ENCODE measurements at regions of chr12 and their contacts with region 1.

Region 1: DNA sequence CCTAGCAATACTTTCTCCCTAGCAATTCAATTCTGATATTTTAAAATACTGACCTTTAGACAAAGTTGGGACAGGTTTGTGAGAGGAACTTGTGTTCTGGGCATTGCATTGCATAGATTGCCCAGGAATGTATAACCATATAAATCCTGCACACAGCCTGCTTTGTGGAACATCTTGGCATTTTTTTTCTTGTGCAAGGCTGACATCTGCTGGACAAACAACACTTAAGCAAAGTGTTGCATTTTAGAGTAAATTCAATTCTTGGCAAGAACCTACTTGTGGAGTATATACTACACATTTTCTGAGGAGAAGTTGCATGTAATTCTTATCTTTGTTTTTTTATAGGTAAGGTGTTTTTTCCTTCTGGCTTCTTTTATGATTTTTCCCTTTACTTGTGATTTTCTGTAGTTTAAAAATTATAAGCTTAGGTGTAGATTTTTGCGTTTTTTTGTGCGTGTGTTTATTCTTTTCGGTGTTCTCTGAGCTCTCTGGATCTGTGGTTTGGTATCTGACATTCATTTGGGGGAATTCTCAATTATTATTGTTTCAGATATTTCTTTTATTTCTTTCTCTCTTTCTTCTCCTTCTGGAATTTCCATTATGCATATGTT is 26.4 kb downstream of the TESPA1 start:
- DNase-seq: peak; percentile 65
- ATAC-seq: peak; percentile 43
- H3K4me3 Mint-ChIP-seq: no peak overlapping the region
- H3K27ac Mint-ChIP-seq: no peak overlapping the region
- H3K4me1 Mint-ChIP-seq: peaks cover 67% of the 10 kb centered on the region
- H3K27me3 Mint-ChIP-seq: no peaks in the 10 kb centered on the region

Region 2: GRCh38 chr12:54541751-54542290 is 416.3 kb before region 1 on chr12:
- CTCF ChIA-PET with region 1: no interaction called
- POLR2A ChIA-PET with region 1: no interaction called
- DNase-seq: no peak
- ATAC-seq: no peak
- H3K4me3 Mint-ChIP-seq: no peak overlapping the region
- H3K27ac Mint-ChIP-seq: no peak overlapping the region
- H3K4me1 Mint-ChIP-seq: no peaks in the 10 kb centered on the region
- H3K27me3 Mint-ChIP-seq: no peaks in the 10 kb centered on the region

Region 3: DNA sequence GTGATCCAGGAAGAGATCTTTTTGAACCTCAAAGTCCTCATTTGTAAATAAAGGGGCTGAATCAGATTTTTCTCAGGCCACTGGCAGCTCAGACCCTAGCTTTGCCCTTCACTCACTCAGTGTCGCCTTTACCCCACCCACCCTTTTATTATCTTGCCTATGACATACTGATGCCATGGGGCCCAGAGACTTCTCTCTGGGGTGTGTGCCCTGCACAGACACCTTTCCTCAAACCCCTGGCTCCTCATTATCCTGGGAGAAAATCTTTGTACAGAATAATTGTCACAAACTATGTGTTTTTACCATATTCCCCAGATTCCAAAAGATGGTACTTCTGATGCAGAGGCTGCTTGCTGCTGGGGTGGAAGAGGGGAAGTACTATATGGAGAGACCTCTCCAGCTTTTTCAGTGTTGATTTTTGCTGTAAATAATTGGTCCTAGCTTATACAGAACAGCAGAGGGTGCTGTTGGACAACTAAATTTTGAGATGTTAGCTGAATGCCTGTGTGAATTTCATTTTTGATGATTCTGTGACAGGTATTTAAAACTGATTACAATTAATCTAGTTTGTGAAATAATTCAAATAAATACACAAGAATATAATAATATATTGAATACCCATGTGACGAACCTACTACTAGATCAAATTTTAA is 256.1 kb before region 1 on chr12:
- CTCF ChIA-PET with region 1: interaction called, 15 read pairs
- POLR2A ChIA-PET with region 1: no interaction called
- DNase-seq: peak; percentile 46
- ATAC-seq: peak; percentile 64
- H3K4me3 Mint-ChIP-seq: no peak overlapping the region
- H3K27ac Mint-ChIP-seq: no peak overlapping the region
- H3K4me1 Mint-ChIP-seq: no peaks in the 10 kb centered on the region
- H3K27me3 Mint-ChIP-seq: peaks cover 16% of the 10 kb centered on the region

Region 4: GRCh38 chr12:54740882-54741281 is 217.3 kb before region 1 on chr12:
- CTCF ChIA-PET with region 1: interaction called, 13 read pairs
- POLR2A ChIA-PET with region 1: no interaction called
- DNase-seq: no peak
- ATAC-seq: peak; percentile 80
- H3K4me3 Mint-ChIP-seq: peak overlapping the region; percentile 32
- H3K27ac Mint-ChIP-seq: peak overlapping the region; percentile 80
- H3K4me1 Mint-ChIP-seq: peaks cover 74% of the 10 kb centered on the region
- H3K27me3 Mint-ChIP-seq: peaks cover 3% of the 10 kb centered on the region

Region 5: GRCh38 chr12:54759751-54760150 is 198.4 kb before region 1 on chr12:
- CTCF ChIA-PET with region 1: interaction called, 23 read pairs
- POLR2A ChIA-PET with region 1: no interaction called
- DNase-seq: peak; percentile 33
- ATAC-seq: no peak
- H3K4me3 Mint-ChIP-seq: no peak overlapping the region
- H3K27ac Mint-ChIP-seq: no peak overlapping the region
- H3K4me1 Mint-ChIP-seq: peaks cover 12% of the 10 kb centered on the region
- H3K27me3 Mint-ChIP-seq: no peaks in the 10 kb centered on the region

Region 6: GRCh38 chr12:54853995-54854566 is 104.1 kb before region 1 on chr12 and contains the start of gene MUCL1:
- CTCF ChIA-PET with region 1: interaction called, 63 read pairs
- POLR2A ChIA-PET with region 1: no interaction called
- DNase-seq: peak; percentile 87
- ATAC-seq: peak; percentile 99
- H3K4me3 Mint-ChIP-seq: no peak within 1 kb of the TSS
- H3K27ac Mint-ChIP-seq: no peak within 1 kb of the TSS
- H3K4me1 Mint-ChIP-seq: peaks cover 13% of the 10 kb centered on the region
- H3K27me3 Mint-ChIP-seq: no peaks in the 10 kb centered on the region
- total RNA-seq, gene MUCL1: not detected

Region 7: GRCh38 chr12:54870604-54871003 is 87.5 kb before region 1 on chr12:
- CTCF ChIA-PET with region 1: no interaction called
- POLR2A ChIA-PET with region 1: no interaction called
- DNase-seq: no peak
- ATAC-seq: no peak
- H3K4me3 Mint-ChIP-seq: no peak overlapping the region
- H3K27ac Mint-ChIP-seq: no peak overlapping the region
- H3K4me1 Mint-ChIP-seq: no peaks in the 10 kb centered on the region
- H3K27me3 Mint-ChIP-seq: peaks cover 11% of the 10 kb centered on the region

Region 8: GRCh38 chr12:54935235-54935951 is 22.8 kb before region 1 on chr12:
- CTCF ChIA-PET with region 1: interaction called, 48 read pairs
- POLR2A ChIA-PET with region 1: no interaction called
- DNase-seq: peak; percentile 67
- ATAC-seq: peak; percentile 91
- H3K4me3 Mint-ChIP-seq: peak overlapping the region; percentile 36
- H3K27ac Mint-ChIP-seq: peak overlapping the region; percentile 97
- H3K4me1 Mint-ChIP-seq: peaks cover 54% of the 10 kb centered on the region
- H3K27me3 Mint-ChIP-seq: no peaks in the 10 kb centered on the region

Region 9: GRCh38 chr12:54984658-54985376 is 26.7 kb after region 1 on chr12 and contains the start of gene TESPA1:
- CTCF ChIA-PET with region 1: interaction called, 27 read pairs
- POLR2A ChIA-PET with region 1: interaction called, 4 read pairs
- DNase-seq: peak; percentile 94
- ATAC-seq: peak; percentile 85
- H3K4me3 Mint-ChIP-seq: peak within 1 kb of the TSS; percentile 91
- H3K27ac Mint-ChIP-seq: peak within 1 kb of the TSS; percentile 86
- H3K4me1 Mint-ChIP-seq: peaks cover 66% of the 10 kb centered on the region
- H3K27me3 Mint-ChIP-seq: no peaks in the 10 kb centered on the region
- total RNA-seq, gene TESPA1: 81.0 to 84.6 TPM

Region 10: GRCh38 chr12:55037351-55037987 is 79.3 kb after region 1 on chr12:
- CTCF ChIA-PET with region 1: no interaction called
- POLR2A ChIA-PET with region 1: no interaction called
- DNase-seq: no peak
- ATAC-seq: no peak
- H3K4me3 Mint-ChIP-seq: no peak overlapping the region
- H3K27ac Mint-ChIP-seq: peak overlapping the region; percentile 10
- H3K4me1 Mint-ChIP-seq: peaks cover 28% of the 10 kb centered on the region
- H3K27me3 Mint-ChIP-seq: peaks cover 2% of the 10 kb centered on the region

Region 11: GRCh38 chr12:55196188-55196587 is 238.0 kb after region 1 on chr12:
- CTCF ChIA-PET with region 1: no interaction called
- POLR2A ChIA-PET with region 1: no interaction called
- DNase-seq: no peak
- ATAC-seq: no peak
- H3K4me3 Mint-ChIP-seq: no peak overlapping the region
- H3K27ac Mint-ChIP-seq: no peak overlapping the region
- H3K4me1 Mint-ChIP-seq: no peaks in the 10 kb centered on the region
- H3K27me3 Mint-ChIP-seq: peaks cover 31% of the 10 kb centered on the region